Transverse colon (tissue), 4 donors: ENCODE measurements at regions of chr12 and their contacts with region 1.

Region 1: DNA sequence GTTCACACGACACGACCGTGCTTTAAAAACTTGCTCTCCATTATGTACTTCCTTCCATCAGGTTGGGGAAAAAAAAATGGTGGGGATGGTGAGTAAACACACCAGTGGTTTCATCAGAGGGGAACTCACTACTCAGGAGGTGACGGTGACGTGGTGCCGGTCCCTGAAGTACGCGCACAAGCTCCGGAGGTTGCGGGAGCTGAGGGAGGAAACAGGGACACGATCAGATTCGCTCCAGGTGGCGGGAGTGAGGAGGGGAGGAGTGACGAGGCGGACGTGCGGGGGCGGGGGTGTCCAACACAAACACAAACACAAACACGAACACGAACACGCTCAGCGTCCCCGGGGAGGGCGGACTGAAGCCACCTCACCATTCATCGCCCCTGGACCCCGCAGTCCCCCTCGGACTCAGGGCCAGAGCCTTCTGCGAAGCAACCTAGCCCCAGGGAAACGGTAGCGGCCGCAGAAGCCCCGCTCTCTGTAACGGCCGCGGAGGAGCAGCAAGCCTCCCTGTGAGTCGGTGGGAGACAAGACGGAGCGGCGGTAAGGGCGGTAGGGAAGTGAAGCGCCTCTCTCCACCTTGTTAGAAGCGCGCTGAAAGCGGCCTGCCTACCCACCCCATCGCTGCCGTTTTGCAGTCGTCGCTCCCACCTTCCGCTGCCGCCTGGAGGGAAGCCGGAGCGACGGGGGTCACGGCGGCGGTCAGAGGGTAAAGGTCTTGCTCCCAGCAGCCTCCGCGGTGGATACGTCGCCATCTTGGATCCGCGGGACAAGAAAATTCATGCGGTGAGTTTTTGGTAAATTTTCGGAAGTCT is at the start of gene CNOT2:
- DNase-seq: peak; percentile 92
- H3K4me3 ChIP-seq: peak within 1 kb of the TSS; percentile 57 to 94 (median 87)
- H3K27ac ChIP-seq: peak within 1 kb of the TSS; percentile 94 to 99 (median 98)
- H3K4me1 ChIP-seq: peaks cover 34 to 52% (median 42%) of the 10 kb centered on the region in 4 donors
- H3K27me3 ChIP-seq: no peaks in the 10 kb centered on the region
- CTCF ChIP-seq: no peak
- EP300 ChIP-seq: no peak
- POLR2A ChIP-seq: peak; percentile 72
- total RNA-seq, gene CNOT2: 36.8 to 204 (median 139) TPM

Region 2: GRCh38 chr12:70365648-70366518 is 123.0 kb after region 1 on chr12 and contains the start of gene KCNMB4:
- in situ Hi-C with region 1: loop called in 1 of 4 experiments (anchors 25 kb)
- intact Hi-C with region 1: no loop called
- DNase-seq: peak; percentile 59
- H3K4me3 ChIP-seq: peak within 1 kb of the TSS; percentile 35 to 85 (median 58)
- H3K27ac ChIP-seq: peak within 1 kb of the TSS in 3 of 4 donors; percentile 26 to 31 (median 30)
- H3K4me1 ChIP-seq: peaks cover 5 to 27% (median 14%) of the 10 kb centered on the region in 4 donors
- H3K27me3 ChIP-seq: peaks cover 78% of the 10 kb centered on the region
- CTCF ChIP-seq: no peak
- EP300 ChIP-seq: no peak
- POLR2A ChIP-seq: no peak
- total RNA-seq, gene KCNMB4: 1.1 to 10.9 (median 1.4) TPM